ENCODE measurements at regions of chr11 and their contacts with region 1.

Region 1: GRCh38 chr11:65013692-65014145 is 241 bp upstream of the ARL2 start:
- DNase-seq: peak; percentile 95 to 96 (median 95)
- ATAC-seq: peak; percentile 85 to 95 (median 94)
- H3K4me3 ChIP-seq: peak overlapping the region; percentile 61 to 89 (median 80)
- H3K27ac ChIP-seq: peak overlapping the region; percentile 92 to 100 (median 99)
- H3K4me1 ChIP-seq: peaks cover 0 to 30% (median 14%) of the 10 kb centered on the region in 12 donors
- H3K27me3 ChIP-seq: no peaks in the 10 kb centered on the region
- CTCF ChIP-seq: peak in 7 of 12 donors; percentile 8 to 72 (median 50)
- POLR2A ChIP-seq: no peak

Region 2: DNA sequence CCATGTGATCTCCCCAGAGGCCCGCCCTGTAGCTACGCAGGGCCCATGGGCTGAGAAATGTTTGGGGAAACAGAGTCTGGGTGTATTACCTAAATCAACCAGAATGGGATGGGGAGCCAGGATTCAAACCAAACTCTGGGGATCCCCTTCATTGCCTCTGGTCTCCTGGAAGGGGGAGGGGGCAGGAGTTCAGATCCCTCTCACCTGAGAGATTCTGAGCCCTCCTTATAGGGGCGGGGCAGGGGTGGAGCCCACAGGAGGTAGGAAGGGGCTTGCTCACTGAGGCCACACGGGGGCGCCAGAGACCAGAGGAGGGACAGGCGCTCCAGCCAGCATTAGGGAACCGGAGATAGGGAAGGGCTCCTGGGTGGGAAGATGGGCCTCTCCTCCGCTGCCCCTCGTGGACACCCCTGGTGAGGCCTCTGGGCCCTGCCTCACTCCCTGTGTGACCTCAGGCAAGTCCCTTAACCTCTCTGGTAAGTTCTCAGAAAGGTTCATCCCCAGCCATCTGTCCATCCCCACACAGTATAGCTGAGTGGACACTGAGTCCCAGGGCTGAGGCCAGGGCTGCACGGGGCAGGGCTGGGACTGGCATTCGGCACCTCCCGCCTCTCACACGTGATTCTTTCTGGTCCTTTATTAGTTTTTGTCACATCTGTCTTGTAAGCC is 166.6 kb before region 1 on chr11:
- intact Hi-C with region 1: loop called in 8 of 10 experiments (anchors 2 to 10 kb)
- DNase-seq: peak; percentile 90 to 96 (median 91)
- ATAC-seq: peak; percentile 79 to 91 (median 84)
- H3K4me3 ChIP-seq: no peak overlapping the region
- H3K27ac ChIP-seq: peak overlapping the region in 6 of 12 donors; percentile 15 to 89 (median 56)
- H3K4me1 ChIP-seq: peaks cover 7 to 61% (median 52%) of the 10 kb centered on the region in 12 donors
- H3K27me3 ChIP-seq: peaks cover 0 to 4% (median 0%) of the 10 kb centered on the region in 9 donors
- CTCF ChIP-seq: peak; percentile 94 to 99 (median 98)
- POLR2A ChIP-seq: peak in 1 of 2 donors; percentile 18

Region 3: DNA sequence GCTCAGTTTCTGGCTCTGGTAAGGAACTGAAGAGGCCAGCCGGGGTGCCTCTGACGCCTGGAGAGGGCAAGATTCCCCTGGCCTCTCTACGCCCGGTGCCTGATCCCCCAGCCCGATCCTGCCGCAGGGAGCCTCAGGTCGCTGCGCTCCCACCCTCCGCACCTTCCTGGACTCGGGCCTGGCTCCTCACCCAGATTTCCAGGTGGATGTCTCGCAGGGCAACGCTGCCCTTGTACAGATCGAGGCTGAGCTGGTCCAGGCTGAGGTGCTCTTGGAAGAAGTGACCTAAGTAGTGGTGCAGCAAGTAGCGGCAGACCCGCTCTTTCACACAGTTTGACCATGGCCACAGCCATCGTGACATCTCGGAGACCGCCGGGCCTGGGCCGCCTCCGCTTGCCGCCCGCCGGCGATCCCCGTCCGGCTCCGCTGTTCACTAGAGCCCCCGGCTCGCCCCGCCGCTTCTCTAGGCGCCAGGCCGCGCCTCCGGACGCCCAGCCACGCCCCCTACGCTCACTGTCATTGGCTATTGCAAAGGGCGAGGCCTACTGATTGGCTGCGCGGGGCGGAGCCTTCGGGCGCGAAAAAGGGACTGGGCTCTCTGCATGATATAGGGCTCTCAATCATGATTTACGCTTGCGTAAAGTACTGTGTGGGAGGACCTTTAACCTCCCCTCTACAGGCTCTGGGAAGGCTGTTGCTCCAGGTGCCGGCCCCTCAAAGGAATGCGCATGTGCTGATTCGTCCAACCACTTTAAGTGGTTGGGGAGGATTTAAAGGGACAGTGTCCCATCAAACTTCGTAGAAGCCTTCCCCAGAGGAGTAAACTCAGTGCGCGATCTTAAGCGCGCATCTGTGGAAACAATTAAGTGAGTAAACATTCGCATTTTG is 96.7 kb before region 1 on chr11 and contains the start of gene ATG2A:
- intact Hi-C with region 1: loop called in 6 of 10 experiments (anchors 5 to 10 kb)
- DNase-seq: peak; percentile 99 to 100 (median 99)
- ATAC-seq: peak; percentile 98 to 99 (median 98)
- H3K4me3 ChIP-seq: peak within 1 kb of the TSS; percentile 67 to 100 (median 97)
- H3K27ac ChIP-seq: peak within 1 kb of the TSS in 11 of 12 donors; percentile 78 to 95 (median 85)
- H3K4me1 ChIP-seq: peaks cover 0 to 42% (median 26%) of the 10 kb centered on the region in 12 donors
- H3K27me3 ChIP-seq: no peaks in the 10 kb centered on the region
- CTCF ChIP-seq: no peak
- POLR2A ChIP-seq: peak; percentile 79 to 96
- total RNA-seq, gene ATG2A: 11.4 to 38.5 (median 18.4) TPM

Region 4: GRCh38 chr11:64924102-64924851 is 89.4 kb before region 1 on chr11 and contains the start of gene PPP2R5B:
- intact Hi-C with region 1: loop called in 8 of 10 experiments (anchors 1 to 10 kb)
- DNase-seq: peak; percentile 96 to 97 (median 96)
- ATAC-seq: peak; percentile 96 to 98 (median 98)
- H3K4me3 ChIP-seq: peak within 1 kb of the TSS; percentile 56 to 100 (median 96)
- H3K27ac ChIP-seq: peak within 1 kb of the TSS; percentile 71 to 99 (median 96)
- H3K4me1 ChIP-seq: peaks cover 0 to 39% (median 25%) of the 10 kb centered on the region in 12 donors
- H3K27me3 ChIP-seq: no peaks in the 10 kb centered on the region
- CTCF ChIP-seq: no peak
- POLR2A ChIP-seq: peak in 1 of 2 donors; percentile 87
- total RNA-seq, gene PPP2R5B: 17.5 to 32.5 (median 22.3) TPM

Region 5: GRCh38 chr11:65027213-65028067 is 13.7 kb after region 1 on chr11 and contains the start of gene SNX15:
- intact Hi-C with region 1: loop called in 1 of 10 experiments (anchors 1 kb)
- DNase-seq: peak; percentile 94 to 95 (median 95)
- ATAC-seq: peak; percentile 96 to 99 (median 98)
- H3K4me3 ChIP-seq: peak within 1 kb of the TSS; percentile 18 to 74 (median 69)
- H3K27ac ChIP-seq: peak within 1 kb of the TSS; percentile 53 to 96 (median 92)
- H3K4me1 ChIP-seq: peaks cover 0 to 18% (median 10%) of the 10 kb centered on the region in 12 donors
- H3K27me3 ChIP-seq: no peaks in the 10 kb centered on the region
- CTCF ChIP-seq: peak; percentile 70 to 92 (median 86)
- POLR2A ChIP-seq: peak in 1 of 2 donors; percentile 82
- total RNA-seq, gene SNX15: 12.7 to 33.0 (median 17.9) TPM

Region 6: DNA sequence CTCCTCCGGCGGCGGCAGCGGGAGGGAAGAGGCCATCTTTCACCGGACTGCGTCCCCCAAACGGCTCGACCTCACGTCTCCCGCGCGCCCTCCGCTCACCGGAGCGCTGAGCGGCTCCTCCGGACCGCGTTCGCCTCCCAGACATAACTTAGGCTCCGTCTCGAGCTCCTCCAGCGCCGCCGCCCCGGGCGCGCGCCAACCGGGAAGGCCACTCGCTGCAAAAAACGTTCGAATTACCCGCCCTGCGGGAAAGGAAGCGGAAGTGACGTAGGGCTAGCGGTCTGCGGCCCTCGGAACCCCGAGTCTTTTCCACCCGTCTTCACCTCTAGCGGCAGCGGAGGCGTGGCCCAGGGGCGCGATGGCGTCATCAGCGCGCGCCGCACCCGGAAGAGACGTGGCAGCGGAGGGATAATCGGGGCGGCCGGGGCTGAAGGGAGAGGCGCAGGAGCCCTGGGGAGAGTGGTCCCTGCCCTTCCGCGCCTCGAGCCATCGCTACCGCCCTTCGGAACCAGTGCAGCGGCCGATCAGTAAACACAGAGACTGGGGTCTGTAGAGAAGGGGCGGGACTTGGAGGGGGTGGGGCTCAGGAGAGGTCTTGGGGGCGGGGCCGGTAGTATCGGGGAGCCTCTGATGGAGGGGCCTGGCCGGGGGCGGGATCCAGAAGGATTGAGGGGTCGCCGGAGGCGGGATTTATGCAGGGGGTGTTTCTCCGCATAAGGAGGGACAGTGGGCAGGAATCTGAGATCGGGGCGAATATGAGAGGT is 70.3 kb after region 1 on chr11 and contains the starts of genes CDCA5 and ZFPL1:
- intact Hi-C with region 1: loop called in 4 of 10 experiments (anchors 5 to 10 kb)
- DNase-seq: peak; percentile 95 to 96 (median 95)
- ATAC-seq: peak; percentile 90 to 98 (median 97)
- H3K4me3 ChIP-seq: peak within 1 kb of the TSS; percentile 44 to 93 (median 79)
- H3K27ac ChIP-seq: peak within 1 kb of the TSS; percentile 45 to 95 (median 90)
- H3K4me1 ChIP-seq: peaks cover 4 to 27% (median 16%) of the 10 kb centered on the region in 12 donors
- H3K27me3 ChIP-seq: no peaks in the 10 kb centered on the region
- CTCF ChIP-seq: no peak
- POLR2A ChIP-seq: peak in 1 of 2 donors; percentile 58
- total RNA-seq, gene CDCA5: 0.42 to 11.6 (median 0.81) TPM
- total RNA-seq, gene ZFPL1: 19.6 to 42.8 (median 25.0) TPM

Region 7: DNA sequence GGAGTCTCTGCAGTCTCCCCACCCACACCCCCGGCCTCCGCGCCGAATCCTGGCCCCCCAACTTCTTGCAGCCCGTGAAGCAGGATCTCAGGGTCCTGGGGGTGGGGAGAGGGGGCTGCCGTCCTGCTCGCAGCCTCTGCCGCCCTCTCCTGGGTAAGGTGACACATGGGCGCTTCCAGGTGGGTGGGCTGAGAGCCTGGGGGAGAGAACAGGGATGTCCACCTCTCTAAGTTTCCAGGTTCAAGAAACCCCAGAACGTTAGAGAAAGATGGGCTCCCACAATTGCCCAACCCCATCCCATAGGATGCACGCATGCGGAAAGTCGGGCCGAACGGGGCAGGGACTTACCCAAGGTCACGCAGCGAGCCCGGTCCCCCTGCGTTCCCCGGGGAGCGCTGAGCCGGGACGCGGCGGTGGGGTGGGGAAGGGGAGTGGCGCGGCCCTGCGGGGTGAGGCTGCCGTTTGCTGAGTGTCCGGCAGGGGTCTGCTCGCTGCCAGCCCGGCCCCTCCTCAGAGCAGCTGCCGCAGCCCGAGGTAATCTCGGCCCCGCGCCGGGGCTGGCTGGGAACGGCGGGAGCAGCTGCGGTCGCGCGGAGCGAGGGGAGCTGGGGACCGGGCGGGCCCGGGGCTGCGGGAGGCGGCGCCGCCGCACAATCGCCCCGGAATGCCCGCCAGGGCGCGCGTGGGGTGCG is 167.3 kb after region 1 on chr11:
- intact Hi-C with region 1: loop called in 2 of 10 experiments (anchors 2 to 5 kb)
- DNase-seq: peak; percentile 51 to 84 (median 64)
- ATAC-seq: peak; percentile 21 to 68 (median 56)
- H3K4me3 ChIP-seq: peak overlapping the region; percentile 65 to 98 (median 80)
- H3K27ac ChIP-seq: peak overlapping the region; percentile 73 to 98 (median 93)
- H3K4me1 ChIP-seq: peaks cover 0 to 30% (median 12%) of the 10 kb centered on the region in 12 donors
- H3K27me3 ChIP-seq: no peaks in the 10 kb centered on the region
- CTCF ChIP-seq: peak; percentile 27 to 58 (median 45)
- POLR2A ChIP-seq: peak in 1 of 2 donors; percentile 64

Measured in heart left ventricle (tissue), 16 donors.